ENCODE measurements at regions of chr10 and their contacts with region 1.

Region 1: DNA sequence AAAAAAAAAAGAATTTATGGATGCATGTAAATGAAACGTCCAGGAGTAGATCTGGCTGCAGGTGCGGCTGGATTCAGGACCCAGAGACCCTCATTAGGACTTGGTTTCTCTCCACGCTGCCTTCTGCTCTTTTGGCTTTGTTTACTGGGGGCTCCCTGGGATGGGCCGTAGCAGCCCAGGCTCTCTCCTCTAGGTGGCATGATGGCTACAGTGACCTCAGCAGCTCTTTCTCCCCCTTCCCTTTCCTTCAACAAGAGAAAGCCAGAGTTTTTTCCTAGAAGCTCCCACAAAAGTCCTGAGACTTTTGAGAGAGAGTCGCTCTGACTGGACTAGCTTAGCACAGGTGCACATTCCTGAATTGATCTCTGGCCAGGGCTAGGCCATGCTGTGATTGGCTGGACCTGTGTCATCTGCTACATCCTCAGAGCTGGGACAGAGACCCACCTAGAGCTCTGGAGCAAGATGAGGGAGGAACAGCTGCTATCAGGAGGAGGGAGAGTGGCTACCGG is 67.8 kb upstream of the PDCD4 start:
- DNase-seq: peak in 7 of 9 experiments; percentile 22 to 79 (median 54)
- ATAC-seq: peak; percentile 51
- H3K4me3 ChIP-seq: no peak overlapping the region
- H3K4me3 Mint-ChIP-seq: peak overlapping the region; percentile 59
- H3K27ac ChIP-seq: peak overlapping the region in 1 of 2 experiments; percentile 44
- H3K27ac Mint-ChIP-seq: peak overlapping the region; percentile 89
- H3K4me1 ChIP-seq: peaks cover 32% of the 10 kb centered on the region
- H3K4me1 Mint-ChIP-seq: peaks cover 40% of the 10 kb centered on the region
- H3K27me3 ChIP-seq: no peaks in the 10 kb centered on the region
- H3K27me3 Mint-ChIP-seq: no peaks in the 10 kb centered on the region
- CTCF ChIP-seq: peak; percentile 58

Region 2: GRCh38 chr10:110820321-110820814 is 16.5 kb after region 1 on chr10:
- CTCF ChIA-PET with region 1: interaction called, 11 read pairs
- POLR2A ChIA-PET with region 1: interaction called, 11 read pairs
- intact Hi-C with region 1: no loop called
- DNase-seq: no peak
- ATAC-seq: no peak
- H3K4me3 ChIP-seq: no peak overlapping the region
- H3K4me3 Mint-ChIP-seq: no peak overlapping the region
- H3K27ac ChIP-seq: no peak overlapping the region
- H3K27ac Mint-ChIP-seq: no peak overlapping the region
- H3K4me1 ChIP-seq: peaks cover 16% of the 10 kb centered on the region
- H3K4me1 Mint-ChIP-seq: peaks cover 29% of the 10 kb centered on the region
- H3K27me3 ChIP-seq: no peaks in the 10 kb centered on the region
- H3K27me3 Mint-ChIP-seq: no peaks in the 10 kb centered on the region
- CTCF ChIP-seq: no peak

Region 3: DNA sequence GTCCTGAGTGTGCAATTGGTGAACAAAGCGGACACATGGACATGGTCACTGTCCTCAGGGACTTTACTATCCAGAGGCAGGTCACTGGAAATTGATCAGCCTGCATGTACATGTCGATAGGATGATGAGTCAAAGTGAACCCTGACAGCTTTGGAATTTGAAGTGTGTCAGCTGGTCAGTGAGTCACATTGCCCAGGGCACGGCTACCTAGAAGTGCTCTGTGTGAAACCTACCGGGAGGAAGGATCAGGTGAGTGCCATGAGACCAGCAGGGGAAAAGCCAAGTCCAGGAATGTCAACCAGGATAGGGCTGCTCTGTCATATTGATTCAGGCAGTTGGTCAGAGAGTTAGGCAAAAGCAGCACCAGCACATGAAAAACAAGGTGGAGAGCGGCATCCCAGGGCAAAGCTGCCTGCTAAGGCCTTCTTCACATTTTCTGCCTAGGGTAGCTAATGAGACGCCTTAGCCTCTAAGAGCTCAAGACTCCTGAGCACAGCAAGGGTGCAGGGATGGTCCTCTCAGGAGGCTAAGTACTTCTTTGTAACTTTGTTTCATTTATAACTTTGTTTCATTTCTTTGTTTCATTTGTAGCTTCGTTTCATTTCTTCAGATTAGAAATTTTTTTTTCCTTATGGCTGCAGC is 48.5 kb after region 1 on chr10:
- CTCF ChIA-PET with region 1: interaction called, 15 read pairs
- POLR2A ChIA-PET with region 1: interaction called, 7 read pairs
- intact Hi-C with region 1: no loop called
- DNase-seq: peak in 2 of 9 experiments; percentile 10 to 47
- ATAC-seq: no peak
- H3K4me3 ChIP-seq: no peak overlapping the region
- H3K4me3 Mint-ChIP-seq: peak overlapping the region; percentile 38
- H3K27ac ChIP-seq: no peak overlapping the region
- H3K27ac Mint-ChIP-seq: peak overlapping the region; percentile 65
- H3K4me1 ChIP-seq: peaks cover 56% of the 10 kb centered on the region
- H3K4me1 Mint-ChIP-seq: peaks cover 80% of the 10 kb centered on the region
- H3K27me3 ChIP-seq: no peaks in the 10 kb centered on the region
- H3K27me3 Mint-ChIP-seq: no peaks in the 10 kb centered on the region
- CTCF ChIP-seq: no peak

Region 4: DNA sequence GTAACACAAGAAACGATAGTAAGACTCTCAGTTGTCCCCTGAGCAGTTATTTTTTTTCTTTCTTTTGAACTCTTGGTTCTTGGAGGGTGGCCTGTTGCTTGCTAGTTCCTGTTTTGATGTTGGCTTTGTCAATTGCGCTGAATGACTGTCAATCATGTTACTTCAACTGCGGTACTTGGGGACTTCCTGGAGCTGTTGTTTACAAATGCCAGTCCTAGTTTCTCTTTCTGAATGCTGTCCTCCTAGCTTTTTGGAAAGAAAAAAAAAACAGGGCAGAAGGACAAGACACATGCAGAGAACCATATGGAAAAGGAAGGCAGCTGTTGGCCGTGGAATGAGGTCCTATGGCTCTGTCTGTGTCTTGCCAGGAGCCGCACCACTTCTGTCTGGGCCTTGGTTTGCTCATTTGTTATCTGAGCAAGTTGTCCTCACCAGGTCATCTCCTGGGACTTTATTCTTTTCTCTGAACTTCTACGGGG is 60.8 kb after region 1 on chr10:
- CTCF ChIA-PET with region 1: interaction called, 16 read pairs
- POLR2A ChIA-PET with region 1: interaction called, 18 read pairs
- intact Hi-C with region 1: no loop called
- DNase-seq: peak in 7 of 9 experiments; percentile 45 to 96 (median 62)
- ATAC-seq: peak; percentile 63
- H3K4me3 ChIP-seq: peak overlapping the region; percentile 5 to 18
- H3K4me3 Mint-ChIP-seq: peak overlapping the region; percentile 78
- H3K27ac ChIP-seq: peak overlapping the region; percentile 77 to 97
- H3K27ac Mint-ChIP-seq: peak overlapping the region; percentile 98
- H3K4me1 ChIP-seq: peaks cover 99% of the 10 kb centered on the region
- H3K4me1 Mint-ChIP-seq: peaks cover 98% of the 10 kb centered on the region
- H3K27me3 ChIP-seq: no peaks in the 10 kb centered on the region
- H3K27me3 Mint-ChIP-seq: no peaks in the 10 kb centered on the region
- CTCF ChIP-seq: no peak

Region 5: DNA sequence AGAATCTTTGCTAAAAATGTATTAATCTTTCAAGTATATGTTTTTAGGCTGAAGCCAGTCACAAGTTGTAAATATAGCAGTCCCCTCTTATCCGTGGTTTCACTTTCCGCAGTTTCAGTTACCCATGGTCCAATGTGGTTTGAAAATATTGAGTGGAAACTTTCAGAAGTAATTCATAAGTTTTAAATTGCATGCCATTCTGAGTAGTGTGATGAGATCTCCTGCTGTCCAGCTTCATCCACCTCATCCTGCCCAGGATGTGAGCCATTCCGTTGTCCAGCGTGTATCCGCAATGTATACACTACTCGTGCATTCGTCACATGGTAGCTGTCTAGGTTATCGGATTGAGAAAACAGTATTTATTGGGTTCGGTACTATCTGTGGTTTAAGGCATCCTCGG is 80.0 kb after region 1 on chr10:
- CTCF ChIA-PET with region 1: interaction called, 28 read pairs
- POLR2A ChIA-PET with region 1: interaction called, 4 read pairs
- intact Hi-C with region 1: no loop called
- DNase-seq: peak in 1 of 9 experiments; percentile 45
- ATAC-seq: peak; percentile 22
- H3K4me3 ChIP-seq: peak overlapping the region in 1 of 2 experiments; percentile 29
- H3K4me3 Mint-ChIP-seq: peak overlapping the region; percentile 74
- H3K27ac ChIP-seq: peak overlapping the region in 1 of 2 experiments; percentile 58
- H3K27ac Mint-ChIP-seq: peak overlapping the region; percentile 83
- H3K4me1 ChIP-seq: peaks cover 68% of the 10 kb centered on the region
- H3K4me1 Mint-ChIP-seq: peaks cover 76% of the 10 kb centered on the region
- H3K27me3 ChIP-seq: no peaks in the 10 kb centered on the region
- H3K27me3 Mint-ChIP-seq: no peaks in the 10 kb centered on the region
- CTCF ChIP-seq: no peak